Dendritic cell treated with granulocyte-macrophage colony-stimulating factor and Interleukin-4, amounts not matched to agents 40 ng/mL and 50 ng/mL, for 4 days (primary cell): ENCODE measurements at regions of chr14 and their contacts with region 1.

Region 1: GRCh38 chr14:94485944-94486841 is 10.2 kb upstream of the SERPINA9 start:
- H3K4me3 Mint-ChIP-seq: no peak overlapping the region
- H3K27ac Mint-ChIP-seq: no peak overlapping the region
- H3K4me1 Mint-ChIP-seq: no peaks in the 10 kb centered on the region
- H3K27me3 Mint-ChIP-seq: peaks cover 20% of the 10 kb centered on the region

Region 2: DNA sequence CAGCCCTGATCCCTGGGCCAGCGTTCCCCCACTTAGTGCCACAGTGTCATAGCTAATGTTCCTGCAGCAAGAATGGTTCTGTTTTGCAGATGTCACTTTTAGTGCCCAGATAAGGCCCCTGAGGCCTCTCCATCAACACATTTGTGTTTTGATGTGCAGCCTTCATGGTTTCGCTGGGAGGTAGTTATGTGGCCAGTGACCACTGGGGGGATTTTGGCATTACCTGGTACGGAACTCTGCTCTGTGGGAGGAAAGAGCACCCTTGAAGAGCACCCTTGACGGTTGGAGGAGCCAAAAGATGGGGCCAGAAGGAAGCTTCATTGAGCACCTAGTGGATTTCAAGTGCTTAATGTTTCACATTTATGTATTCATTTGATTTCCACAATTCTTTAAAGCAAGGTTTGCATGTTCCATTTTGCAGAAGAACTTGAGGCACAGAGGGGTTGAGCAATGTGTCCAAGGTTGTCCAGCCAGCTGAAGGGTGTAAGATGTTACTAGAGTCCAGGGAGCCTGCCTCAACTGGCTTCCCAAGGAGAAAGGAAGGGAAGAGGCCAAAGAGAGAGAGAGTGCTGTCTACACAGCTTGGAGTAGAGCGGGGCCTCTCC is 46.6 kb before region 1 on chr14:
- intact Hi-C with region 1: loop called (anchors 1 kb)
- H3K4me3 Mint-ChIP-seq: no peak overlapping the region
- H3K27ac Mint-ChIP-seq: no peak overlapping the region
- H3K4me1 Mint-ChIP-seq: no peaks in the 10 kb centered on the region
- H3K27me3 Mint-ChIP-seq: peaks cover 23% of the 10 kb centered on the region